CD4-positive, alpha-beta memory T cell (primary cell): ENCODE measurements at regions of chr4 and their contacts with region 1.

Region 1: DNA sequence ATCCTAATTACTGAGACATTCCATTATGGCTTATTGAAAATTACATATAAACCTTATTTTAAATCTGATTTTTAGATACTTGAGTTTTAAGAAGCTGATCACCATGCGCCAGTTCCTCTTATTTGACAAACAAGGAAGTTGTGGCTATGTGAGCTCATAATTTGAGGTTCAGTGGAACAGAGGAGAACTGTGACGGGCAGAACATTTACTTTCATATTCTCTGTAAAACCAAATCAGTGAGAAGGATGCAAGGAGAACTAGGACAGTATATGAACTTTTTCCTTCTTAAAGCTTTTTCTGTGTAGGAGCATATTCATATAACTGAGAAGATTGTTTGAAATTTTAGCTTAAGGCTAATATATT is 25.3 kb downstream of the STIM2 start:
- DNase-seq: peak; percentile 73 to 83 (median 80)
- H3K4me3 ChIP-seq: peak overlapping the region; percentile 36 to 44
- H3K4me3 Mint-ChIP-seq: peak overlapping the region; percentile 75 to 90 (median 85)
- H3K27ac ChIP-seq: peak overlapping the region; percentile 81
- H3K27ac Mint-ChIP-seq: peak overlapping the region; percentile 83 to 99 (median 97)
- H3K4me1 ChIP-seq: peaks cover 78% of the 10 kb centered on the region
- H3K4me1 Mint-ChIP-seq: peaks cover 60 to 91% (median 72%) of the 10 kb centered on the region in 4 donors
- H3K27me3 ChIP-seq: no peaks in the 10 kb centered on the region
- H3K27me3 Mint-ChIP-seq: no peaks in the 10 kb centered on the region

Region 2: DNA sequence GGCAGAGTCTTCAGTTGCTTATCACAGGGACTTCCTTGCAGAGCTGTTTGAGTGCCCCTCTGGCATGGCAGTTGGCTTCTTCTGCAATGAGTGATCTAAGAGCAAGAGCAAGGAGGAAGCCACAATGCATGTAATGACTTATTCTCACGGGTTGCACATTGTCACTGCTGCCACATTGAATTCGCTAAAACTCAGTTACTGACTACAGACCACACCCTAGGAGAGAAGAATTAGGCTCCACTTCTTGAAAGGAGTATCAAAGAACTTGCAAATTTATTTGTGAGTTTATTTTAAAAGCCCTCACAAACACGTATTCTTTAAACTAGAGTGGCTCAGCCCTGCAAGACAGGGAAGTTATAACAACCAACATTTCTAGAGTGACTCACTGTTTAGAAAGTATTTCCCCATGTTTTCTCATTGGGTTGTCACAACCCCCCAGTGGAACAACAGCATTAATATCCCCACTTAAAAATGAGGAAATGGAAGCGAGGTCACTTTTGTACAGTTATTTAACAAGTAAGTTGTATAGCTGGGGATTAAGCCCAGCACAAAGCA is 597.5 kb before region 1 on chr4:
- CTCF ChIA-PET with region 1: no interaction called
- POLR2A ChIA-PET with region 1: no interaction called
- intact Hi-C with region 1: no loop called
- DNase-seq: no peak
- H3K4me3 ChIP-seq: no peak overlapping the region
- H3K4me3 Mint-ChIP-seq: no peak overlapping the region
- H3K27ac ChIP-seq: no peak overlapping the region
- H3K27ac Mint-ChIP-seq: peak overlapping the region in 1 of 7 donors; percentile 32
- H3K4me1 ChIP-seq: no peaks in the 10 kb centered on the region
- H3K4me1 Mint-ChIP-seq: peaks cover 5 to 6% (median 6%) of the 10 kb centered on the region in 4 donors
- H3K27me3 ChIP-seq: no peaks in the 10 kb centered on the region
- H3K27me3 Mint-ChIP-seq: no peaks in the 10 kb centered on the region

Region 3: GRCh38 chr4:26583865-26584652 is 301.8 kb before region 1 on chr4 and contains the start of gene TBC1D19:
- CTCF ChIA-PET with region 1: interaction called, 3 read pairs
- POLR2A ChIA-PET with region 1: interaction called, 29 read pairs
- intact Hi-C with region 1: no loop called
- DNase-seq: peak; percentile 87 to 90 (median 89)
- H3K4me3 ChIP-seq: peak within 1 kb of the TSS; percentile 44 to 75
- H3K4me3 Mint-ChIP-seq: peak within 1 kb of the TSS; percentile 91 to 99 (median 96)
- H3K27ac ChIP-seq: peak within 1 kb of the TSS; percentile 81
- H3K27ac Mint-ChIP-seq: peak within 1 kb of the TSS; percentile 89 to 99 (median 98)
- H3K4me1 ChIP-seq: peaks cover 17% of the 10 kb centered on the region
- H3K4me1 Mint-ChIP-seq: peaks cover 18 to 38% (median 26%) of the 10 kb centered on the region in 4 donors
- H3K27me3 ChIP-seq: no peaks in the 10 kb centered on the region
- H3K27me3 Mint-ChIP-seq: peaks cover 1 to 2% of the 10 kb centered on the region in 2 donors
- total RNA-seq, gene TBC1D19: 7.9 to 9.5 TPM

Region 4: GRCh38 chr4:26836539-26836938 is 49.4 kb before region 1 on chr4:
- CTCF ChIA-PET with region 1: no interaction called
- POLR2A ChIA-PET with region 1: no interaction called
- intact Hi-C with region 1: no loop called
- DNase-seq: no peak
- H3K4me3 ChIP-seq: no peak overlapping the region
- H3K4me3 Mint-ChIP-seq: no peak overlapping the region
- H3K27ac ChIP-seq: no peak overlapping the region
- H3K27ac Mint-ChIP-seq: no peak overlapping the region
- H3K4me1 ChIP-seq: peaks cover 7% of the 10 kb centered on the region
- H3K4me1 Mint-ChIP-seq: peaks cover 7 to 14% (median 10%) of the 10 kb centered on the region in 4 donors
- H3K27me3 ChIP-seq: no peaks in the 10 kb centered on the region
- H3K27me3 Mint-ChIP-seq: no peaks in the 10 kb centered on the region

Region 5: GRCh38 chr4:26867914-26868684 is 17.8 kb before region 1 on chr4:
- CTCF ChIA-PET with region 1: interaction called, 17 read pairs
- POLR2A ChIA-PET with region 1: interaction called, 74 read pairs
- intact Hi-C with region 1: no loop called
- DNase-seq: no peak
- H3K4me3 ChIP-seq: no peak overlapping the region
- H3K4me3 Mint-ChIP-seq: peak overlapping the region in 6 of 8 donors; percentile 7 to 67 (median 59)
- H3K27ac ChIP-seq: no peak overlapping the region
- H3K27ac Mint-ChIP-seq: peak overlapping the region in 6 of 7 donors; percentile 37 to 85 (median 64)
- H3K4me1 ChIP-seq: peaks cover 86% of the 10 kb centered on the region
- H3K4me1 Mint-ChIP-seq: peaks cover 63 to 88% (median 76%) of the 10 kb centered on the region in 4 donors
- H3K27me3 ChIP-seq: no peaks in the 10 kb centered on the region
- H3K27me3 Mint-ChIP-seq: no peaks in the 10 kb centered on the region

Region 6: GRCh38 chr4:26873391-26874026 is 12.4 kb before region 1 on chr4:
- CTCF ChIA-PET with region 1: interaction called, 14 read pairs
- POLR2A ChIA-PET with region 1: interaction called, 74 read pairs
- intact Hi-C with region 1: loop called (anchors 1 kb)
- DNase-seq: peak; percentile 68 to 95 (median 80)
- H3K4me3 ChIP-seq: no peak overlapping the region
- H3K4me3 Mint-ChIP-seq: peak overlapping the region; percentile 50 to 89 (median 76)
- H3K27ac ChIP-seq: peak overlapping the region; percentile 55
- H3K27ac Mint-ChIP-seq: peak overlapping the region; percentile 84 to 96 (median 94)
- H3K4me1 ChIP-seq: peaks cover 85% of the 10 kb centered on the region
- H3K4me1 Mint-ChIP-seq: peaks cover 62 to 82% (median 74%) of the 10 kb centered on the region in 4 donors
- H3K27me3 ChIP-seq: no peaks in the 10 kb centered on the region
- H3K27me3 Mint-ChIP-seq: no peaks in the 10 kb centered on the region

Region 7: GRCh38 chr4:26899991-26900390 is 14.1 kb after region 1 on chr4:
- CTCF ChIA-PET with region 1: no interaction called
- POLR2A ChIA-PET with region 1: interaction called, 11 read pairs
- intact Hi-C with region 1: no loop called
- DNase-seq: no peak
- H3K4me3 ChIP-seq: no peak overlapping the region
- H3K4me3 Mint-ChIP-seq: peak overlapping the region in 6 of 8 donors; percentile 25 to 72 (median 64)
- H3K27ac ChIP-seq: no peak overlapping the region
- H3K27ac Mint-ChIP-seq: peak overlapping the region in 3 of 7 donors; percentile 39 to 77 (median 67)
- H3K4me1 ChIP-seq: peaks cover 73% of the 10 kb centered on the region
- H3K4me1 Mint-ChIP-seq: peaks cover 61 to 78% (median 68%) of the 10 kb centered on the region in 4 donors
- H3K27me3 ChIP-seq: no peaks in the 10 kb centered on the region
- H3K27me3 Mint-ChIP-seq: no peaks in the 10 kb centered on the region

Region 8: GRCh38 chr4:26916195-26916594 is 30.3 kb after region 1 on chr4:
- CTCF ChIA-PET with region 1: no interaction called
- POLR2A ChIA-PET with region 1: interaction called, 6 read pairs
- intact Hi-C with region 1: loop called (anchors 5 kb)
- DNase-seq: no peak
- H3K4me3 ChIP-seq: no peak overlapping the region
- H3K4me3 Mint-ChIP-seq: peak overlapping the region in 4 of 8 donors; percentile 11 to 50 (median 28)
- H3K27ac ChIP-seq: no peak overlapping the region
- H3K27ac Mint-ChIP-seq: peak overlapping the region in 6 of 7 donors; percentile 17 to 78 (median 50)
- H3K4me1 ChIP-seq: peaks cover 55% of the 10 kb centered on the region
- H3K4me1 Mint-ChIP-seq: peaks cover 38 to 82% (median 57%) of the 10 kb centered on the region in 4 donors
- H3K27me3 ChIP-seq: no peaks in the 10 kb centered on the region
- H3K27me3 Mint-ChIP-seq: no peaks in the 10 kb centered on the region

Region 9: GRCh38 chr4:26985873-26986272 is 100.0 kb after region 1 on chr4:
- CTCF ChIA-PET with region 1: no interaction called
- POLR2A ChIA-PET with region 1: interaction called, 10 read pairs
- intact Hi-C with region 1: no loop called
- DNase-seq: peak; percentile 60 to 70 (median 65)
- H3K4me3 ChIP-seq: no peak overlapping the region
- H3K4me3 Mint-ChIP-seq: peak overlapping the region in 7 of 8 donors; percentile 1 to 77 (median 64)
- H3K27ac ChIP-seq: no peak overlapping the region
- H3K27ac Mint-ChIP-seq: peak overlapping the region in 5 of 7 donors; percentile 25 to 77 (median 42)
- H3K4me1 ChIP-seq: peaks cover 33% of the 10 kb centered on the region
- H3K4me1 Mint-ChIP-seq: peaks cover 36 to 54% (median 44%) of the 10 kb centered on the region in 4 donors
- H3K27me3 ChIP-seq: no peaks in the 10 kb centered on the region
- H3K27me3 Mint-ChIP-seq: no peaks in the 10 kb centered on the region

Region 10: DNA sequence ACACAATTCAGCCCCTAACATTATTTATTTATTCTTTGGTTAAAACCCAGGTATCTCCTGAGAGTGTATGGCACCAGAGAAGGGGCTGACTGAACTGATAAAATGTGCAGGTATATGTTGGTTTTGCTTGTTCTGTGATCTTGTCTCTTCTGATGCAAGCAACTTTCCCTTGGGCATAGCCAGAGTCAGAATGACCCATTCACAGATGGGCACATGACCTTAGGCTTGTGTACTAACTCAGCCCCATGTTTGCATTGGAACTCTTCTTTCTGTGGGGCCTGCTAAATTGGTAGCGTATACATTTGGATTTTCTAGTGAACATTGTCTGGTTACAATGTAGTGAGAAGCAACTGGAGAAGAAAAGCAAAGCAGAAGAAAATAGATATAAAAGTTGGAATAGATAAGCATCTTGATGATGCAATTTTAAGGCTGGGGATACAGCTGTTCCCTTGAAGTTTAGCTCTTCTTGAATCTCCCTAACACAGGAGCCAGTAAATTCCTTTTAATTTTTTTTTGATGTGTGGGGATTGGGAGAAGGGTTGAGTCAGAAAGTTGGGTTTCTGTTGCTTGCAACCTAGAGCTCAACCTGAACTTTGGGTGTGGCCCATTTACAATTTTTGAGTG is 282.8 kb after region 1 on chr4:
- CTCF ChIA-PET with region 1: no interaction called
- POLR2A ChIA-PET with region 1: no interaction called
- intact Hi-C with region 1: no loop called
- DNase-seq: no peak
- H3K4me3 ChIP-seq: no peak overlapping the region
- H3K4me3 Mint-ChIP-seq: no peak overlapping the region
- H3K27ac ChIP-seq: no peak overlapping the region
- H3K27ac Mint-ChIP-seq: no peak overlapping the region
- H3K4me1 ChIP-seq: no peaks in the 10 kb centered on the region
- H3K4me1 Mint-ChIP-seq: no peaks in the 10 kb centered on the region
- H3K27me3 ChIP-seq: no peaks in the 10 kb centered on the region
- H3K27me3 Mint-ChIP-seq: peaks cover 2% of the 10 kb centered on the region in 2 donors